ENCODE measurements at regions of chr1 and their contacts with region 1.

Region 1: GRCh38 chr1:113226148-113226547 is 153.2 kb downstream of the LRIG2 start:
- DNase-seq: no peak
- ATAC-seq: no peak
- H3K4me3 Mint-ChIP-seq: no peak overlapping the region
- H3K27ac Mint-ChIP-seq: no peak overlapping the region
- H3K4me1 Mint-ChIP-seq: peaks cover 4% of the 10 kb centered on the region
- H3K27me3 Mint-ChIP-seq: no peaks in the 10 kb centered on the region; the same call in 1 of the 2 replicates
- CTCF ChIP-seq: no peak

Region 2: GRCh38 chr1:114219172-114219868 is 993.2 kb after region 1 on chr1:
- CTCF ChIA-PET with region 1: no interaction called
- POLR2A ChIA-PET with region 1: interaction called, 10 read pairs
- DNase-seq: no peak
- ATAC-seq: peak; percentile 79
- H3K4me3 Mint-ChIP-seq: no peak overlapping the region
- H3K27ac Mint-ChIP-seq: no peak overlapping the region
- H3K4me1 Mint-ChIP-seq: peaks cover 27% of the 10 kb centered on the region
- H3K27me3 Mint-ChIP-seq: peaks cover 15% of the 10 kb centered on the region
- CTCF ChIP-seq: no peak

Measured in WTC11 (cell line).